ENCODE measurements at regions of chr11 and their contacts with region 1.

Region 1: GRCh38 chr11:65888163-65888814 is at the start of gene FIBP:
- DNase-seq: peak; percentile 98
- ATAC-seq: peak; percentile 68
- H3K4me3 Mint-ChIP-seq: peak within 1 kb of the TSS; percentile 94
- H3K27ac Mint-ChIP-seq: peak within 1 kb of the TSS; percentile 91
- H3K4me1 Mint-ChIP-seq: peaks cover 51% of the 10 kb centered on the region
- H3K27me3 Mint-ChIP-seq: no peaks in the 10 kb centered on the region
- CTCF ChIP-seq: peak; percentile 75
- total RNA-seq, gene FIBP: 78.8 to 79.9 TPM

Region 2: DNA sequence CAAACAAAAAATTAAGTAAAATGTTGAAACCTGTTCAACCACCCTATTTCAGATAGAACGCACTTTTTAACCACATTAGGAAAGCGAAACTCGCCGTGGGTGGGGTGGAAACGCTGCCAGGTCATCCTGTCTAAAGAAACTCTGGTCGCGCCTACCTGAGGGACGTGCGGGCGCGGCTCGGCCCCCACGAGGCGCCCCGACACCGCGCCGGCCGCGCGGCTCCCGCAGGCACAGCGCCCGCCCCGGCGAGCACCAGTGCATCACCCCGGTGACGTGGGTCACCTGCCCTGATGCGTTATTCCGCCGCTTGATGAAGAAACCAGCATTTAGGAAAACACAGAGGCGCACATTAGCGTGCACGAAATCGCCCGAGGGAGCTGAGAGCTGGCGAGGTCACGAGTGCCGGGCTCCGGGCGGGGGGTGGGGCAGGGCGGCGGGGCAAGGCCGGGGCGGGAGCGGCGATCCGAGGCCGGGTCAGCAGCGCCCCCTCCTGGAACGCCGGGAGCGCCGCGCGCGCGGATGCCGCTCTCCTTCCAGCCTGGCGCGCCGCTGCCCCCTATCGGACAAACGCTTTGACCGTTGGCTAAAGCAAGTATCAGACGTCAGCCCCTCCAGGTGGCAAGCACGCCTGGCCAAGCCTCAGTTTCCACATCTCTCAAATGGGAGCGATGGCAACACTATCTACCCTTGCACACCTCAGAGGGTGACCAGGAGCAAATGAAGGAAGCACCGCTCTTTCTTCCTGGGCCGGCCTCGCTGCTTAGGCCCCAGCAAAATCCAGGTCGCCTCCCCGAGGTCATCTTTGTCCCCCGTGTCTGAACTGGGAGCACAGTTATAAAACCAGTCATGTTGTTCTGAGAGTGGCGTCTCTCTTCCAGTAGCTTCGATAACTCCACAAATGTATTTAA is 70.2 kb before region 1 on chr11:
- CTCF ChIA-PET with region 1: interaction called, 11 read pairs
- POLR2A ChIA-PET with region 1: interaction called, 3 read pairs
- intact Hi-C with region 1: no loop called
- DNase-seq: peak; percentile 97
- ATAC-seq: peak; percentile 94
- H3K4me3 Mint-ChIP-seq: peak overlapping the region; percentile 72
- H3K27ac Mint-ChIP-seq: peak overlapping the region; percentile 82
- H3K4me1 Mint-ChIP-seq: peaks cover 17% of the 10 kb centered on the region
- H3K27me3 Mint-ChIP-seq: no peaks in the 10 kb centered on the region
- CTCF ChIP-seq: peak; percentile 100

Region 3: GRCh38 chr11:65859200-65859811 is 29.0 kb before region 1 on chr11:
- CTCF ChIA-PET with region 1: interaction called, 283 read pairs
- POLR2A ChIA-PET with region 1: interaction called, 560 read pairs
- intact Hi-C with region 1: no loop called
- DNase-seq: peak; percentile 100
- ATAC-seq: peak; percentile 72
- H3K4me3 Mint-ChIP-seq: peak overlapping the region; percentile 90
- H3K27ac Mint-ChIP-seq: peak overlapping the region; percentile 99
- H3K4me1 Mint-ChIP-seq: peaks cover 37% of the 10 kb centered on the region
- H3K27me3 Mint-ChIP-seq: no peaks in the 10 kb centered on the region
- CTCF ChIP-seq: no peak

Region 4: GRCh38 chr11:65911682-65912568 is 23.6 kb after region 1 on chr11:
- CTCF ChIA-PET with region 1: interaction called, 12 read pairs
- POLR2A ChIA-PET with region 1: interaction called, 20 read pairs
- intact Hi-C with region 1: no loop called
- DNase-seq: no peak
- ATAC-seq: no peak
- H3K4me3 Mint-ChIP-seq: no peak overlapping the region
- H3K27ac Mint-ChIP-seq: no peak overlapping the region
- H3K4me1 Mint-ChIP-seq: peaks cover 20% of the 10 kb centered on the region
- H3K27me3 Mint-ChIP-seq: peaks cover 4% of the 10 kb centered on the region
- CTCF ChIP-seq: no peak

Region 5: GRCh38 chr11:65961232-65961901 is 73.1 kb after region 1 on chr11 and contains the start of gene SART1:
- CTCF ChIA-PET with region 1: interaction called, 17 read pairs
- POLR2A ChIA-PET with region 1: interaction called, 54 read pairs
- intact Hi-C with region 1: loop called (anchors 10 kb)
- DNase-seq: peak; percentile 98
- ATAC-seq: peak; percentile 91
- H3K4me3 Mint-ChIP-seq: peak within 1 kb of the TSS; percentile 82
- H3K27ac Mint-ChIP-seq: peak within 1 kb of the TSS; percentile 97
- H3K4me1 Mint-ChIP-seq: peaks cover 47% of the 10 kb centered on the region
- H3K27me3 Mint-ChIP-seq: no peaks in the 10 kb centered on the region
- CTCF ChIP-seq: no peak
- total RNA-seq, gene SART1: 58.3 to 63.9 TPM

Region 6: GRCh38 chr11:66045177-66045639 is 156.9 kb after region 1 on chr11:
- CTCF ChIA-PET with region 1: interaction called, 15 read pairs
- POLR2A ChIA-PET with region 1: interaction called, 4 read pairs
- intact Hi-C with region 1: no loop called
- DNase-seq: peak; percentile 88
- ATAC-seq: peak; percentile 93
- H3K4me3 Mint-ChIP-seq: peak overlapping the region; percentile 38
- H3K27ac Mint-ChIP-seq: peak overlapping the region; percentile 69
- H3K4me1 Mint-ChIP-seq: peaks cover 20% of the 10 kb centered on the region
- H3K27me3 Mint-ChIP-seq: peaks cover 7% of the 10 kb centered on the region
- CTCF ChIP-seq: peak; percentile 98

Measured in activated CD8-positive, alpha-beta T cell treated with anti-CD3 and anti-CD28 coated beads for 36 hours (primary cell).